ENCODE measurements at regions of chr4 and their contacts with region 1.

Region 1: DNA sequence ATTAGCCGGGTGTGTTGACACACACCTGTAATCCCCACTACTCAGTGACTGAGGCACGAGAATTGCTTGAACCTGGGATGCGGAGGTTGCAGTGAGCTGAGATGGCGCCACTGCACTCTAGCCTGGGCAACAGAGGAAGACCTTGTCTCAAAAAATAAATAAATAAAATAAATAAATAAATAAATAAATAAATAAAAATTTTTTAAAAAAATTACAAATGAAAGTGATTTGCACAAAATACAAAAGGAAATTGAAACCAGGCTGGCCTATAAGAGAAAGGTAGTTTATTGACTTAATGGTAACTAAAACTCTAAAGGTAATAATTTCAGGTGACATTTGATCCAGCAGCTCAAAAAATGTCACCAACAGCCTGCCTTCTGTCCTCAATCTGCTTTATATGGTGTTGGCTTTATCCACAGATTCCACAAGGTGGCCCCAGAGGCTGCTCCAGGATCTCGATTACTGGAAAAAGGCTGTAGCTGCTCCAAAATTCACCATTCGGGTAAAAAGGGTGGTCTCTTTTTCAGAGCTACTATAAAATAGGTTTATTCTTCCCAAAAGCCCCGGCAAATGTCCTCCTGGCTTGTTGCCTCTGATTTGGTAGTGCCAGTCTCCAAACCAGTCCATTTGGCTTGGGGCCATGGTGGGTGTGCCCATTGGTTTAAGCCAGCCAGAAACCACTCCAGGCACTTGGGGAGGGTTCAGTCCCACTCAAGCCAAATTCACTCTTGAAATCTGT is 61.4 kb upstream of the TRIM2 start:
- DNase-seq: peak; percentile 73
- ATAC-seq: peak; percentile 83
- H3K4me3 ChIP-seq: no peak overlapping the region
- H3K27ac ChIP-seq: no peak overlapping the region
- H3K4me1 ChIP-seq: peaks cover 1% of the 10 kb centered on the region; the same call in 1 of the 2 replicates
- H3K27me3 ChIP-seq: no peaks in the 10 kb centered on the region
- CTCF ChIP-seq: peak; percentile 94
- POLR2A ChIP-seq: no peak
- RAD21 ChIP-seq: peak; percentile 96

Region 2: DNA sequence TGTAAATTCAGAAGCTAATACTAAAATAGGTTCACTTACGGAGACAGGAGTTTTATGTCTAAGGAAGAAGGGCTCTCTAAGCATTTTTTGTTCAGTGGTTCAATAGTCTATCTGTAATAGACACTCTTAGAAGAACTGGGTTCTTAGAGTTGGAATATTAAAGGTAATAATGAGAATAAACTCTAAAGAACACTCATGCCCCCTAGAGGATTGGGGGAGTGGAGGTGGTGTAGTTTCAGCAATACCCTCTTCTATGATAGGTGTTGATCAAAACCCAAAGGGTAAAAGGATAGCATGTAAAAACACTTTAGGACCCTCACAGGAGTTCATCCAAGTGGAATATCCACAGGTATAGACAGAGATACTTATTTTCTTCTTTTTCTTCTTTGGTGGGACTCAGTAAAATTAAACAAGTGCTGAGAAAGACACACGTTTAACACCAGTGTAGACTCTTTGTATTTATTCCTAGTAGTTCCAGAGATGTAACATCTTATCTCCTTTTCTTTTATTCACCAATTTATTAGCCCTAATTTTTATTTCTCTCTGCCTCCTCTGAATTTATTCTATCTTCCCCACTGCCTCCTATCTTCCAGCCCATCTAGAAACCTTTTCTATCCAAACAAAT is 175.9 kb after region 1 on chr4:
- CTCF ChIA-PET with region 1: interaction called, 8 read pairs
- POLR2A ChIA-PET with region 1: no interaction called
- dilution Hi-C with region 1: no loop called
- in situ Hi-C with region 1: loop called (anchors 5 kb)
- intact Hi-C with region 1: loop called (anchors 1 kb)
- DNase-seq: peak; percentile 54
- ATAC-seq: peak; percentile 90
- H3K4me3 ChIP-seq: no peak overlapping the region
- H3K27ac ChIP-seq: no peak overlapping the region
- H3K4me1 ChIP-seq: no peaks in the 10 kb centered on the region
- H3K27me3 ChIP-seq: no peaks in the 10 kb centered on the region
- CTCF ChIP-seq: peak; percentile 80
- POLR2A ChIP-seq: no peak
- RAD21 ChIP-seq: peak; percentile 84

Region 3: GRCh38 chr4:153466081-153466948 is 323.4 kb after region 1 on chr4 and contains the start of gene TMEM131L:
- CTCF ChIA-PET with region 1: interaction called, 4 read pairs
- POLR2A ChIA-PET with region 1: no interaction called
- dilution Hi-C with region 1: no loop called
- in situ Hi-C with region 1: no loop called
- intact Hi-C with region 1: loop called (anchors 10 kb)
- DNase-seq: peak; percentile 52
- ATAC-seq: peak; percentile 90
- H3K4me3 ChIP-seq: peak within 1 kb of the TSS; percentile 96
- H3K27ac ChIP-seq: peak within 1 kb of the TSS; percentile 65
- H3K4me1 ChIP-seq: peaks cover 2% of the 10 kb centered on the region; the same call in 1 of the 2 replicates
- H3K27me3 ChIP-seq: no peaks in the 10 kb centered on the region
- CTCF ChIP-seq: no peak
- POLR2A ChIP-seq: 0 out of 2 replicates have a peak, but pooled peaks have one; percentile 33
- RAD21 ChIP-seq: no peak; the same call in 1 of the 2 replicates
- total RNA-seq, gene TMEM131L: 16.1 and 23.8 TPM in 2 replicates

Region 4: DNA sequence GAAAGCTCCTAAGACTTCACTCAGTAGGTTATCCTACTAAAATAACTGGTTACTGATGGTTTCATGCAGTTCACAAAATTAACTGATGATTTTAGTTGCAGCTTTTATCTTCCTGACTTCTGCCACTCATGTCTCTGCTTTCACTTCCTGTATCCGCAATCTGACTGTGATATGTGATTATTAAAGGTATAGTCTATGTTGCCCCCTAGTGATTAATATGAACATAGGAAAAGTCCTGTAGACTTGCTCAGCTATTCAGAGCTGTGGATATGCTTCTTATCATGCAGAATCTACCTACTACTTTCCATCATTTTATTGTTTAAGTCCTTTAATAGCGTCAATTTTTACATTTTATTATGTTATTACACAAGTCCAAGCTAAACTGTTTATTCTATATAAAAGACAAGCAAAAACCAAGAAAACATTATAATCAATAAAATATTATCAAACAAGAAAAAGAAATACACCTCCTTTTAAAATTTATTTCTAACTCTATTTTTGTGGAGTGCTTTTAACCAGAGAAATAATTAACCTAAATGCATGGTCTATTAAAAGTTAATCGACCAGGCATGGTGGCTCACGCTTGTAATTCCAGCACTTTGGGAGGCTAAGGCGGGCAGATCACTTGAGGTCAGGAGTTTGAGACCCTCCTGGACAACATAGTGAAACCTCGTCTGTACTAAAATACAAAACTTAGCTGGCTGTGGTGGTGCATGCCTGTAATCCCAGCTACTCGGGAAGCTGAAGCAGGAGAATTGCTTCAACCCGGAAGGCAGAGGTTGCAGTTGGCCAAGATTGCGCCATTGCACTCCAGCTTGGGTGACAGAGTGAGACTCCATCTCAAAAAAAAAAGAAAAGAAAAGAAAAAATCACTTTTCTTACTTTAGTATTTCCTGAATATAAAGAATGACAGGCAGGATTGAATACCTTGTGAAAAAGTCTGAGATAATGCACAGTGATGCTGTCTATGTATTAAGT is 500.8 kb after region 1 on chr4:
- CTCF ChIA-PET with region 1: interaction called, 4 read pairs
- POLR2A ChIA-PET with region 1: no interaction called
- dilution Hi-C with region 1: no loop called
- in situ Hi-C with region 1: no loop called
- intact Hi-C with region 1: loop called (anchors 2 kb)
- DNase-seq: peak; percentile 59
- ATAC-seq: peak; percentile 93
- H3K4me3 ChIP-seq: no peak overlapping the region
- H3K27ac ChIP-seq: no peak overlapping the region
- H3K4me1 ChIP-seq: no peaks in the 10 kb centered on the region
- H3K27me3 ChIP-seq: no peaks in the 10 kb centered on the region; the same call in 1 of the 2 replicates
- CTCF ChIP-seq: peak; percentile 53
- POLR2A ChIP-seq: no peak
- RAD21 ChIP-seq: peak; percentile 47

Region 5: GRCh38 chr4:153791746-153792617 is 649.1 kb after region 1 on chr4:
- CTCF ChIA-PET with region 1: no interaction called
- POLR2A ChIA-PET with region 1: no interaction called
- dilution Hi-C with region 1: no loop called
- in situ Hi-C with region 1: no loop called
- intact Hi-C with region 1: no loop called
- DNase-seq: no peak
- ATAC-seq: no peak
- H3K4me3 ChIP-seq: no peak overlapping the region
- H3K27ac ChIP-seq: no peak overlapping the region
- H3K4me1 ChIP-seq: no peaks in the 10 kb centered on the region; the same call in 1 of the 2 replicates
- H3K27me3 ChIP-seq: peaks cover 58% of the 10 kb centered on the region
- CTCF ChIP-seq: no peak
- POLR2A ChIP-seq: no peak
- RAD21 ChIP-seq: no peak

Measured in IMR-90 (cell line).